CD8-positive, alpha-beta T cell (primary cell): ENCODE measurements at regions of chr1 and their contacts with region 1.

Region 1: GRCh38 chr1:9428601-9429341 is 110.5 kb upstream of the SLC25A33 start:
- DNase-seq: peak; percentile 99 to 100 (median 100)
- ATAC-seq: peak; percentile 79
- H3K4me3 ChIP-seq: peak overlapping the region; percentile 51 to 54
- H3K4me3 Mint-ChIP-seq: peak overlapping the region; percentile 97
- H3K27ac ChIP-seq: peak overlapping the region; percentile 64 to 69
- H3K27ac Mint-ChIP-seq: peak overlapping the region; percentile 99
- H3K4me1 ChIP-seq: peaks cover 44% of the 10 kb centered on the region
- H3K4me1 Mint-ChIP-seq: peaks cover 51% of the 10 kb centered on the region
- H3K27me3 ChIP-seq: peaks cover 0 to 4% of the 10 kb centered on the region in 2 experiments
- H3K27me3 Mint-ChIP-seq: no peaks in the 10 kb centered on the region
- CTCF ChIP-seq: no peak

Region 2: GRCh38 chr1:8817406-8818324 is 611.1 kb before region 1 on chr1 and contains the start of gene RERE:
- CTCF ChIA-PET with region 1: no interaction called
- POLR2A ChIA-PET with region 1: no interaction called
- intact Hi-C with region 1: loop called in 1 of 2 experiments (anchors 5 kb)
- DNase-seq: peak; percentile 91 to 99 (median 97)
- ATAC-seq: peak; percentile 96
- H3K4me3 ChIP-seq: peak within 1 kb of the TSS; percentile 84 to 98
- H3K4me3 Mint-ChIP-seq: peak within 1 kb of the TSS; percentile 92
- H3K27ac ChIP-seq: peak within 1 kb of the TSS; percentile 85 to 90
- H3K27ac Mint-ChIP-seq: peak within 1 kb of the TSS; percentile 90
- H3K4me1 ChIP-seq: peaks cover 24% of the 10 kb centered on the region
- H3K4me1 Mint-ChIP-seq: peaks cover 41% of the 10 kb centered on the region
- H3K27me3 ChIP-seq: no peaks in the 10 kb centered on the region
- H3K27me3 Mint-ChIP-seq: no peaks in the 10 kb centered on the region
- CTCF ChIP-seq: no peak
- total RNA-seq, gene RERE: 62.8 to 68.4 TPM

Region 3: GRCh38 chr1:9234223-9235095 is 194.3 kb before region 1 on chr1 and contains the start of gene H6PD:
- CTCF ChIA-PET with region 1: no interaction called
- POLR2A ChIA-PET with region 1: no interaction called
- intact Hi-C with region 1: loop called (anchors 1 kb)
- DNase-seq: peak; percentile 43 to 89 (median 71)
- ATAC-seq: peak; percentile 76
- H3K4me3 ChIP-seq: peak within 1 kb of the TSS; percentile 71 to 84
- H3K4me3 Mint-ChIP-seq: peak within 1 kb of the TSS; percentile 96
- H3K27ac ChIP-seq: peak within 1 kb of the TSS; percentile 64 to 84
- H3K27ac Mint-ChIP-seq: peak within 1 kb of the TSS; percentile 96
- H3K4me1 ChIP-seq: peaks cover 26% of the 10 kb centered on the region
- H3K4me1 Mint-ChIP-seq: peaks cover 38% of the 10 kb centered on the region
- H3K27me3 ChIP-seq: no peaks in the 10 kb centered on the region
- H3K27me3 Mint-ChIP-seq: no peaks in the 10 kb centered on the region
- CTCF ChIP-seq: peak; percentile 22
- total RNA-seq, gene H6PD: 11.1 to 11.2 TPM

Region 4: DNA sequence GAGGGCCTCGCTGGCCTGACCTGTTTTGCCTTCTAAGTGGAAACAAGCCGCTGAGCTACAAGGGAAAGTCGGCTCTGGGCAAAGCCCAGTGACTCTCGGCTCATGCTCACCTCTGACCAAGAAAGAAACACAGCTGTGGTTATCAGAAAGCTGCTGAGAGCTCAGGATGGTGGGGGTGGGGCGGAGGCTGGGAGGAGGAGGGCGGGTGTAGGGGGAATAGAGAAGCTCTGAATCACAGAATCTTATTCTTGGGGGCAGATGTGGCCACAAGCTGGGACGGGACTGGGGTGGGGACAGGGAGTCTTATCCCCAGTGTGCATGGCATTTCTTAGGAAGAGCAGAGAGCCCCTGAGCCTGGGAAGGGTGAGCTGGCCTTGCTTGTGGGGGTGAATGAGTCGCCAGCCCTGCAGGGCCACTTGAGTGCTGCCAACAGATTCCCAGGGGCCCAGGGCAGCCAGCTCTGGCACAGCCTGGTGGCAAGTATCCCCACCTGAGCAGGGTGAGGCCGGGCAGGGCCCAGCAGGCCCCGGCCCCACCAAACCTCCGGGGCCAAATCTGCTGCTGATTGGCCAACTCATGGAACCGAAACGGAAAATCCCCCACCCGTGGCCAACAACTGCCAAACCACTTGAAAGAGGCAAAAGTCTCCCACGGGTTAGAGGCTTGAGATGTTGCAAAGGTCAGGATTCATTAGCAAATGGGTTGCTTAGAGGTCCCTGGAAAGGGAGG is 15.5 kb before region 1 on chr1:
- CTCF ChIA-PET with region 1: interaction called, 5 read pairs
- POLR2A ChIA-PET with region 1: interaction called, 6 read pairs
- intact Hi-C with region 1: loop called (anchors 1 to 2 kb)
- DNase-seq: peak in 6 of 9 experiments; percentile 23 to 73 (median 46)
- ATAC-seq: peak; percentile 68
- H3K4me3 ChIP-seq: no peak overlapping the region
- H3K4me3 Mint-ChIP-seq: peak overlapping the region; percentile 37
- H3K27ac ChIP-seq: no peak overlapping the region
- H3K27ac Mint-ChIP-seq: no peak overlapping the region
- H3K4me1 ChIP-seq: peaks cover 30% of the 10 kb centered on the region
- H3K4me1 Mint-ChIP-seq: peaks cover 53% of the 10 kb centered on the region
- H3K27me3 ChIP-seq: no peaks in the 10 kb centered on the region
- H3K27me3 Mint-ChIP-seq: no peaks in the 10 kb centered on the region
- CTCF ChIP-seq: no peak

Region 5: DNA sequence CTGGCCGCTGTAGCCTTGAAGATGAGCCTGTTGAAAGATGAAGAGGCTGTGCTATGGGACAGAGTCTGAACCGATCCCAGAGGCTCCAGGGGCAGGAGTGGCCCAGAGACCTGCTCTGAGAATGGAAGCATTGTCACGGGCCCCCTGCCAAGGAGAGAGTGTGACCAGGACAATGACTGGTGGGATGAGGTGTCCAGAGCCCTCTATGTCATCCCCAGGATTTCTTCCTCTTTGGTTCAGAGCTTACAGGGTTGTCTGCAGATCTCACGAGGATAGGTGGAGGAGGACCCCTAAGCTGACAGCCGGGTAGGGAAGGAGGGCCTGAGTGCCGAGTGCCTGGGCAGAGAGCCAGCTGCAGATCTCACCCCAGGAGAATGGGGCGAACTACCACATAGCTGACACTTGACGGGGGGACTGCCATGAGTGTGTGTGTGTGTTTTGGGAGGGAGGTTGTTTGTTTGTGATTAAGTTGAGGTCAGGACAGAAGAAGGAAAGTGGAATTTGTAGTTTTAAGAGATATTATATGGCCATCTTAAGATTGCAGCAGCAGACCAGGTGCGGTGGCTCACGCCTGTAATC is 248.1 kb after region 1 on chr1:
- CTCF ChIA-PET with region 1: no interaction called
- POLR2A ChIA-PET with region 1: no interaction called
- intact Hi-C with region 1: no loop called
- DNase-seq: peak in 1 of 9 experiments; percentile 31
- ATAC-seq: peak; percentile 41
- H3K4me3 ChIP-seq: no peak overlapping the region
- H3K4me3 Mint-ChIP-seq: peak overlapping the region; percentile 19
- H3K27ac ChIP-seq: peak overlapping the region in 1 of 2 experiments; percentile 50
- H3K27ac Mint-ChIP-seq: peak overlapping the region; percentile 92
- H3K4me1 ChIP-seq: peaks cover 82% of the 10 kb centered on the region
- H3K4me1 Mint-ChIP-seq: peaks cover 77% of the 10 kb centered on the region
- H3K27me3 ChIP-seq: no peaks in the 10 kb centered on the region
- H3K27me3 Mint-ChIP-seq: no peaks in the 10 kb centered on the region
- CTCF ChIP-seq: no peak

Region 6: GRCh38 chr1:10398734-10399623 is 970.2 kb after region 1 on chr1 and contains the start of gene PGD:
- CTCF ChIA-PET with region 1: no interaction called
- POLR2A ChIA-PET with region 1: no interaction called
- intact Hi-C with region 1: loop called in 1 of 2 experiments (anchors 2 kb)
- DNase-seq: peak; percentile 91 to 98 (median 97)
- ATAC-seq: peak; percentile 97
- H3K4me3 ChIP-seq: peak within 1 kb of the TSS; percentile 86 to 97
- H3K4me3 Mint-ChIP-seq: peak within 1 kb of the TSS; percentile 97
- H3K27ac ChIP-seq: peak within 1 kb of the TSS; percentile 57 to 67
- H3K27ac Mint-ChIP-seq: peak within 1 kb of the TSS; percentile 77
- H3K4me1 ChIP-seq: peaks cover 16% of the 10 kb centered on the region
- H3K4me1 Mint-ChIP-seq: peaks cover 22% of the 10 kb centered on the region
- H3K27me3 ChIP-seq: no peaks in the 10 kb centered on the region
- H3K27me3 Mint-ChIP-seq: no peaks in the 10 kb centered on the region
- CTCF ChIP-seq: no peak
- total RNA-seq, gene PGD: 20.2 to 21.7 TPM